Activated naive CD4-positive, alpha-beta T cell treated with anti-CD3 and anti-CD28 coated beads for 36 hours (primary cell): ENCODE measurements at regions of chr11 and their contacts with region 1.

Region 1: GRCh38 chr11:34438529-34439507 is at the start of gene CAT:
- DNase-seq: peak; percentile 99
- H3K4me3 Mint-ChIP-seq: peak within 1 kb of the TSS; percentile 89
- H3K27ac Mint-ChIP-seq: peak within 1 kb of the TSS; percentile 85
- H3K4me1 Mint-ChIP-seq: peaks cover 29% of the 10 kb centered on the region
- H3K27me3 Mint-ChIP-seq: no peaks in the 10 kb centered on the region
- total RNA-seq, gene CAT: 28.3 to 29.1 TPM

Region 2: DNA sequence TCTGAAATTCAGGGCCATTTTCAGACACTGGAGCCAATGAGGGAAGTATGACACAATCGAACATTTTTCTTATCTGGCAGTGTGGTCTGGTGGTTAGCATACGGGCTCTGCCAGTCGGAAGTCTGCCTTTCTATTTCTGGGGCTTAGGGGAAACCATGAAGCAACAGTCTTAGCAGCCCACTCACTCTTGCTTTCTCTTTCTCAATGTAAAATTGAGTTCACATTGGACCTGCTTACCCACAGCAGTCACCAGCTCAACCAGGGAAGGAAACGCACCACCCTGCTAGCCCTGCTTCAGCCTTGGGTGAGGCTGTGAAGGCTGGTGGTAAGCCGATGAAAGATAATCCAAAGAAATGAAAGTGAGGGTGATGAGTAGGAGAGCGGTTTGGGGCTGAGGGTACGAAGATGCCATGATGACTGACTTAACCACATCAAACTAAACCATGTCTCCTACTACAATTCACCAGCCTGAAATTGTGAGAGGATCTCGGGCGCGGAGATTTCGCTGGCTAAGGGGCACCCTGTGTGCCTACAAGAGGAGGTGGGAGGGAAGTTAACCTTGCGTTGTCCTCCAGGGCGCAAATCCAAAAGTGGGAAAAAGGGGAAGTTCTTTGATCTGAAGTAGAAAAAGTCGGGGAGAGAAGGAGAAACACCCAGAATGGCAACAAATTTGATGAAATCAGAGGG is 545.0 kb before region 1 on chr11:
- CTCF ChIA-PET with region 1: no interaction called
- intact Hi-C with region 1: loop called (anchors 2 kb)
- DNase-seq: peak; percentile 87
- H3K4me3 Mint-ChIP-seq: peak overlapping the region; percentile 57
- H3K27ac Mint-ChIP-seq: peak overlapping the region; percentile 33
- H3K4me1 Mint-ChIP-seq: peaks cover 47% of the 10 kb centered on the region
- H3K27me3 Mint-ChIP-seq: peaks cover 47% of the 10 kb centered on the region

Region 3: DNA sequence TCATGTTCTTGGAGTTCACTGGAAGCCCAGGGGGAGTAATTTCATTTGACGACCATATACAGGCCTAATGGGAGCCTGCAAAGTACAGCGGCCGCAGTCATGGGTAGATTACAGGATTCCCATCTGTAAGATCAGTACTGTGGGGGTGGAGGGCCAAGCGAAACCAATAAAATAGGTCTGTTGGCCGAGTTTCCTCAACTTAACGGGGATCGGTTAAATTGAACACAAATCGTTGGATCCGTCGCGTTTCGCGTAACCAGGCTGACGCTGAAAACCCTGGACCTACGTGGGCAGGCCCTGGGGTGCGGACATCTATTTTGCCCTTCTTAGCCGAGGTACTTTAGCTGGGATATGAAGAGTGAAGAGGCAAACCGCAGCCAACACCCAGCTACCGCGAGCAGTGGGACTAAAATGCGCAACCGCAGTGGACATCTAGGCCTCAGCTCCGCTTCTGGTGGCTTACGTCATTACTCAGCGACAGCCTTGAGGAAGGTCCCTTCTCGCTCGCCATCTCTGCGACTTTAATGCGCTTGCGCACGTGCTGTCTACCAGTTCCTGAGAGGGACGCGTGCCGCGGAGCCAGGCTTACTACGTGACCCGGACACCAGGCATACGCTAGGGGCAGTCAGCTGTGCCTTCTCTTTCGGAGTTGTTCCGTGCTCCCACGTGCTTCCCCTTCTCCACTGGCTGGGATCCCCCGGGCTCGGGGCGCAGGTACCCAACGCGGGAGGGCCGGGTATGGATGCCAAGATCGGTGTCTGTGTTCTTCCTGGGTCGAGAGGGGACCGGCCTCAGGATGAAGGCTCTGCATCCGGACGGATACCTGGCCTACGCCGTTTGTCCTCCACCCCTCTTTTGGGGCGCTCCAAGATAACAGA is 333.5 kb before region 1 on chr11 and contains the start of gene NAT10:
- CTCF ChIA-PET with region 1: no interaction called
- intact Hi-C with region 1: loop called (anchors 1 kb)
- DNase-seq: peak; percentile 98
- H3K4me3 Mint-ChIP-seq: peak within 1 kb of the TSS; percentile 94
- H3K27ac Mint-ChIP-seq: peak within 1 kb of the TSS; percentile 94
- H3K4me1 Mint-ChIP-seq: peaks cover 51% of the 10 kb centered on the region
- H3K27me3 Mint-ChIP-seq: no peaks in the 10 kb centered on the region
- total RNA-seq, gene NAT10: 91.0 to 93.3 TPM

Region 4: DNA sequence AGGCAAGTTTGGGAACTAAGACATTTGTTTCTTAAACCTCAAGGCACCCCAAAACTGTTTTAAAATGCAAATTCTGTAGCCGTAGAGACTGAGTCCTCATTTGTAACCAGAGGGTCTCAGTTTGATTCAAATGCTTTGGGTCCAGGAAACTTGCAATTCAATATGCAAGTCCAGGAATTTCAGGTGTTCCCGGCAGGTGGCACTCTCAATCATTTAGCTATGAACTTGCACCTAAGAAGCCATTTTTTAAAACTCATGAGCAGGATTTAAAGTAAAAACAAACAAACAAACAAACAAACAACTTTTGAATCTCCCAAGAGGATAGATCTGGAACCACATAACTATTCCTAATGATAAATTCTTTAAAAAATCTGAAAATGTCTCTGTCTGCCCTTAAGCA is 72.3 kb before region 1 on chr11:
- CTCF ChIA-PET with region 1: no interaction called
- intact Hi-C with region 1: loop called (anchors 1 kb)
- DNase-seq: peak; percentile 55
- H3K4me3 Mint-ChIP-seq: no peak overlapping the region
- H3K27ac Mint-ChIP-seq: no peak overlapping the region
- H3K4me1 Mint-ChIP-seq: peaks cover 14% of the 10 kb centered on the region
- H3K27me3 Mint-ChIP-seq: peaks cover 9% of the 10 kb centered on the region

Region 5: GRCh38 chr11:34468209-34468841 is 29.5 kb after region 1 on chr11:
- CTCF ChIA-PET with region 1: interaction called, 12 read pairs
- intact Hi-C with region 1: loop called (anchors 2 kb)
- DNase-seq: peak; percentile 78
- H3K4me3 Mint-ChIP-seq: no peak overlapping the region
- H3K27ac Mint-ChIP-seq: no peak overlapping the region
- H3K4me1 Mint-ChIP-seq: no peaks in the 10 kb centered on the region
- H3K27me3 Mint-ChIP-seq: no peaks in the 10 kb centered on the region

Region 6: GRCh38 chr11:34916015-34916842 is 477.4 kb after region 1 on chr11 and contains the starts of genes APIP and PDHX:
- CTCF ChIA-PET with region 1: no interaction called
- intact Hi-C with region 1: loop called (anchors 1 kb)
- DNase-seq: peak; percentile 98
- H3K4me3 Mint-ChIP-seq: peak within 1 kb of the TSS; percentile 99
- H3K27ac Mint-ChIP-seq: peak within 1 kb of the TSS; percentile 96
- H3K4me1 Mint-ChIP-seq: peaks cover 44% of the 10 kb centered on the region
- H3K27me3 Mint-ChIP-seq: no peaks in the 10 kb centered on the region
- total RNA-seq, gene APIP: 42.4 to 42.5 TPM
- total RNA-seq, gene PDHX: 38.2 to 40.9 TPM